Mammary epithelial cell (primary cell): ENCODE measurements at regions of chr5 and their contacts with region 1.

Region 1: DNA sequence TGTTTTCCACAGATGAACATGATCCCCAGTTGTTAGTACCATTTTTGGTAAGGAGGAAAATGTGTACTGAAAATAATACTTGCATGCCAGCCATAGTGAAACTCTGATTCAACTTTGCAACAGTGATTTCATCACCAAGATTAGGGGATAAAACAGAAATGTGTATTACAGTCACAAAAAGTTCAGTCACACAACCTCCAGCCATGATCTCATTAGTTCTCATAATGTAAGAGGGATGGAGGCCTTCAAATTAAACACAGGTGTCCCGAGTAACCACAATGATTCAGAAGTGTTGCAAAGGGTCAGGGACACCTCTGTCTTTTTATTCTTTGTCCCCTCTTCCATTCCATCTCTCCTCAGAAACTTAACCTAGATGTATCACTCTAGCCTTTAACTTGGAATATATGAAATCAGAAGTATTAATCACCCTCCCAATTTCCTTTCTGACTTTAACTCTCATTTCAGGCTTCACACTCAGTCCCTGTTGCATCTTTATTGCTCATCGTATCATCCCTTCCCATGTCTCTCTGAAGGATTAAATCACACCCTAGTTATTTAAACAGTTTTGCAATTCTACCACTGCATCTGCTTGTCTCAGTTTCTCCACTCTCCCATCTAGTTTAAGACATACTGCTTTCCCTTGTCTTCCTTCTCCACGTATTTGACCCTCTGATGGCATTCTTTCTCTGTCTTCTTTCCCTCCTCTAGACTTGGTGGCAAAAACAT is 291.2 kb downstream of the ADAMTS6 start:
- DNase-seq: peak; percentile 99
- H3K4me3 ChIP-seq: no peak overlapping the region
- H3K27ac ChIP-seq: peak overlapping the region; percentile 94
- H3K4me1 ChIP-seq: peaks cover 40% of the 10 kb centered on the region
- H3K27me3 ChIP-seq: no peaks in the 10 kb centered on the region
- CTCF ChIP-seq: no peak

Region 2: GRCh38 chr5:65035211-65036206 is 155.0 kb before region 1 on chr5:
- CTCF ChIA-PET with region 1: no interaction called
- dilution Hi-C with region 1: no loop called
- in situ Hi-C with region 1: no loop called
- intact Hi-C with region 1: loop called (anchors 5 kb)
- DNase-seq: peak; percentile 92
- H3K4me3 ChIP-seq: peak overlapping the region; percentile 60 to 68 (median 67)
- H3K27ac ChIP-seq: peak overlapping the region; percentile 84
- H3K4me1 ChIP-seq: peaks cover 15% of the 10 kb centered on the region
- H3K27me3 ChIP-seq: no peaks in the 10 kb centered on the region
- CTCF ChIP-seq: peak in 1 of 2 donors; percentile 21

Region 3: GRCh38 chr5:65102828-65103711 is 87.4 kb before region 1 on chr5:
- CTCF ChIA-PET with region 1: no interaction called
- dilution Hi-C with region 1: no loop called
- in situ Hi-C with region 1: no loop called
- intact Hi-C with region 1: loop called (anchors 5 kb)
- DNase-seq: no peak
- H3K4me3 ChIP-seq: peak overlapping the region in 2 of 3 experiments; percentile 21 to 39
- H3K27ac ChIP-seq: no peak overlapping the region
- H3K4me1 ChIP-seq: peaks cover 14% of the 10 kb centered on the region
- H3K27me3 ChIP-seq: no peaks in the 10 kb centered on the region
- CTCF ChIP-seq: peak in 1 of 2 donors; percentile 3

Region 4: GRCh38 chr5:65203746-65204145 is 13.3 kb after region 1 on chr5:
- CTCF ChIA-PET with region 1: no interaction called
- dilution Hi-C with region 1: no loop called
- in situ Hi-C with region 1: no loop called
- intact Hi-C with region 1: loop called (anchors 1 kb)
- DNase-seq: peak; percentile 90
- H3K4me3 ChIP-seq: no peak overlapping the region
- H3K27ac ChIP-seq: peak overlapping the region; percentile 97
- H3K4me1 ChIP-seq: peaks cover 60% of the 10 kb centered on the region
- H3K27me3 ChIP-seq: no peaks in the 10 kb centered on the region
- CTCF ChIP-seq: no peak

Region 5: DNA sequence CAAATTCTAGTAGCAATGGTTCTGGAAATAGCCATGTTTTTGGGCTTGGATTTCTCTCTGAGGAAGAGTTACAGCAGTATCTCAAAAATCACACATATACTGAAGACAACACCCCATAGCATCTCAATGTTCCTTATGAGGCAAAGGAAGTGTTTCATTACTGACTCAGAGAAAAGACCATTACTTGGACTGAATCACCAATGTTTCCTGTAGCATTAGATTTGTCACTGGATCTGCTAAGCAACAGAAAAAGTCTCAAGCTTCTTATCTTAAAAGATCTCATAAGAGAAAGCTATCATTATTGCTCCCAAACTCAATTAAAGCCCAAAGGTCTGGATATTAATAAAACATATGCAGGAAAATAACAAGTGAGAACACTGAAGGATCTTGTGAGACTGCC is 18.9 kb after region 1 on chr5:
- CTCF ChIA-PET with region 1: no interaction called
- dilution Hi-C with region 1: no loop called
- in situ Hi-C with region 1: no loop called
- intact Hi-C with region 1: loop called (anchors 1 kb)
- DNase-seq: peak; percentile 90
- H3K4me3 ChIP-seq: no peak overlapping the region
- H3K27ac ChIP-seq: peak overlapping the region; percentile 99
- H3K4me1 ChIP-seq: peaks cover 32% of the 10 kb centered on the region
- H3K27me3 ChIP-seq: no peaks in the 10 kb centered on the region
- CTCF ChIP-seq: no peak